IMR-90 (cell line): ENCODE measurements at regions of chr7 and their contacts with region 1.

Region 1: GRCh38 chr7:106640368-106641141 is 20.4 kb downstream of the CCDC71L start:
- DNase-seq: peak; percentile 81
- ATAC-seq: peak; percentile 62
- H3K4me3 ChIP-seq: no peak overlapping the region
- H3K27ac ChIP-seq: no peak overlapping the region
- H3K4me1 ChIP-seq: peaks cover 2% of the 10 kb centered on the region; the same call in 1 of the 2 replicates
- H3K27me3 ChIP-seq: no peaks in the 10 kb centered on the region
- CTCF ChIP-seq: no peak
- POLR2A ChIP-seq: no peak
- RAD21 ChIP-seq: no peak

Region 2: DNA sequence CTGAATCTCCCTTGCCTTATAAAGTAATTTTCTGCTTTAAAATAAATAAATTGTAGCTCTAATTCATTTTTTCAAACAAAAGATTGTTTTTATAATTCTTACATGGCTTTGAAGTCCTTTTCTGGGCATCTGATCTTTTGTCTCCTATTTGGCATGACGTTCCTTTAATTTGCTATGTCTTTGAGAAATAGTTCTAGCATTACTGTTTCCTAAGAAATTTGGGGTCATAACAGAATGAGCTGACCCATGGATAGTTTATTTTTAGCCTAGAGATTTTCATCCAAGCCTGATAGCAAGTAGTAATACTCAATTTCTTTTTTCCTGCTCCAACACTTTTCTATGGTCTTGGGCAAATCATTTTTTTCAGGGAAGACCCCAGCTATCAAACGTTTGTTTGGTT is 11.0 kb before region 1 on chr7:
- CTCF ChIA-PET with region 1: interaction called, 11 read pairs
- POLR2A ChIA-PET with region 1: no interaction called
- dilution Hi-C with region 1: no loop called
- in situ Hi-C with region 1: no loop called
- intact Hi-C with region 1: no loop called
- DNase-seq: peak; percentile 68
- ATAC-seq: peak; percentile 90
- H3K4me3 ChIP-seq: no peak overlapping the region
- H3K27ac ChIP-seq: peak overlapping the region; percentile 20; the same call in 1 of the 2 replicates
- H3K4me1 ChIP-seq: peaks cover 11% of the 10 kb centered on the region
- H3K27me3 ChIP-seq: no peaks in the 10 kb centered on the region
- CTCF ChIP-seq: no peak
- POLR2A ChIP-seq: no peak
- RAD21 ChIP-seq: no peak